ENCODE measurements at regions of chr7 and their contacts with region 1.

Region 1: DNA sequence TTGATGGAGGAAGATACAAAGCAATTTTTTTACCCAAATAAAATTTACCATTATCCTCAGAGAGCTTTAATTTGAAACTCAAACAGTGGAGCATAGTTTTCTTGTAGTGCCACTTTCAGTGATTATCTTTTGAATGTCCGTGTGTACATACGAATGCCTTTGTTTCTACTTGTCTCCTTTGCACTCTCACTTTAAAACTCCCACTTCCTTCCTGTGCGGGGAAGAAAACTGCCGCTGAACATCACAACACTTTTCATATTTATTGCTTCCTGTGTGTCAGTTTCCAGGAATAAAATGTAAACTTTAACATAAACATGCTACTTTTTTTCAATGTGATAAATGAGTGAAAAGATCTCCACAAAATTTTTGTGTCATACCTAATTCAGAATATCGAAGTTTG is 102.4 kb downstream of the SEMA3A start:
- DNase-seq: no peak
- H3K4me3 Mint-ChIP-seq: peak overlapping the region; percentile 66
- H3K27ac Mint-ChIP-seq: peak overlapping the region; percentile 80
- H3K4me1 Mint-ChIP-seq: peaks cover 18% of the 10 kb centered on the region
- H3K27me3 Mint-ChIP-seq: peaks cover 3% of the 10 kb centered on the region

Region 2: DNA sequence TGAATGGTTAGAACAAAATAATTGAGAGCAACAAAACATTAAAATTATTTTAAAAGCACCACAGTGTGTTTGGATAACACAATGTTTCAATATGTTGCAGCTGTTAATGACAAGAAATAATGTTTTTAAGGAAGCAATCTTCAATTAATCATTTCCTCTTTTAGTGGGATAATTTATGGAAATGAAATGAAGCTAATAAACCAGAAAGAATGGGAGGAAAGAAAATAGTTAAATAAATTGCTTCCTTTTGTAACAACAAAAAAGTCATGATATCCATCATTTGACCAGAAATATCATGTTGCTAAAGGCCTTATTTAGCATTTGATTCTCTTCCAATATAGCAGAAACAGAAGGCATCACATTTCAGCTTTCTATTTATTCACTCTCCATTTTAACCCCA is 122.1 kb before region 1 on chr7:
- intact Hi-C with region 1: no loop called
- DNase-seq: no peak
- H3K4me3 Mint-ChIP-seq: no peak overlapping the region
- H3K27ac Mint-ChIP-seq: no peak overlapping the region
- H3K4me1 Mint-ChIP-seq: no peaks in the 10 kb centered on the region
- H3K27me3 Mint-ChIP-seq: no peaks in the 10 kb centered on the region

Region 3: GRCh38 chr7:84073186-84073875 is 18.9 kb before region 1 on chr7:
- intact Hi-C with region 1: no loop called
- DNase-seq: no peak
- H3K4me3 Mint-ChIP-seq: no peak overlapping the region
- H3K27ac Mint-ChIP-seq: no peak overlapping the region
- H3K4me1 Mint-ChIP-seq: peaks cover 24% of the 10 kb centered on the region
- H3K27me3 Mint-ChIP-seq: no peaks in the 10 kb centered on the region

Region 4: DNA sequence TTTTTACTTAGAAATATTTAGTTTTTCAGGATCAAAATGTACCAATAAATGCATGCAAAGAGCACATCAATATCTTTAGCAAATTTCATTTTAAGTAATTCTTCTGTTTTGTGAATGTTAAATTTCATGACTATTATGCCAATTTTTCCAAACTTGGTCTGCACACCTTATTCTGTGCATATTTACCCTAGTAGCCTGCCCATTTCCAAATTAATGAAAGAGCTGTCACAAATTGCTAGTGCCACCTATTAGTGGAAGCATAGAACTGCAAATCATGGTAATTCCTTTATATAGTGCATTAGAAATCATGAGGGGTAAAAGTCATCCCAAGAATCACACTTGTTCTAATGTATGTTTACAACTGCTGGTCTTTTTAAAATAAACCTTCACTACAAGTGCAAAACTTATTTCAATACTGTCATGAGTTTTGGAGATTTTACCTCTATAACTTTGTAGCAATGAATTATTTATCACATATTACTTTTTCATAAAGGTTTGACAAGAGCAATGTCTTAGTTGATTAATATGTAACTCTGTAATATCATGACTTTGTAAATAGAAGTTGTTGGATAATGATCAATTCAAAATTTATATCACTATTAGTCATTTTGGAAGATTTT is 96.7 kb after region 1 on chr7:
- intact Hi-C with region 1: loop called (anchors 5 kb)
- DNase-seq: no peak
- H3K4me3 Mint-ChIP-seq: no peak overlapping the region
- H3K27ac Mint-ChIP-seq: no peak overlapping the region
- H3K4me1 Mint-ChIP-seq: peaks cover 10% of the 10 kb centered on the region
- H3K27me3 Mint-ChIP-seq: peaks cover 9% of the 10 kb centered on the region

Measured in activated T-helper 2 cell treated with anti-CD3 and anti-CD28 coated beads, Interferon-gamma antibody, Interleukin-2, Interleukin-4, amounts not matched to agents 10 μg/mL and 5 μg/mL and 100 μg/mL, durations not matched to agents 14 hours and 24 hours and 36 hours (primary cell).